Activated CD8-positive, alpha-beta T cell treated with anti-CD3 and anti-CD28 coated beads, Interleukin-2, amount 10 ng/mL, durations not matched to agents 7 days and 5 days (primary cell): ENCODE measurements at regions of chr15 and their contacts with region 1.

Region 1: DNA sequence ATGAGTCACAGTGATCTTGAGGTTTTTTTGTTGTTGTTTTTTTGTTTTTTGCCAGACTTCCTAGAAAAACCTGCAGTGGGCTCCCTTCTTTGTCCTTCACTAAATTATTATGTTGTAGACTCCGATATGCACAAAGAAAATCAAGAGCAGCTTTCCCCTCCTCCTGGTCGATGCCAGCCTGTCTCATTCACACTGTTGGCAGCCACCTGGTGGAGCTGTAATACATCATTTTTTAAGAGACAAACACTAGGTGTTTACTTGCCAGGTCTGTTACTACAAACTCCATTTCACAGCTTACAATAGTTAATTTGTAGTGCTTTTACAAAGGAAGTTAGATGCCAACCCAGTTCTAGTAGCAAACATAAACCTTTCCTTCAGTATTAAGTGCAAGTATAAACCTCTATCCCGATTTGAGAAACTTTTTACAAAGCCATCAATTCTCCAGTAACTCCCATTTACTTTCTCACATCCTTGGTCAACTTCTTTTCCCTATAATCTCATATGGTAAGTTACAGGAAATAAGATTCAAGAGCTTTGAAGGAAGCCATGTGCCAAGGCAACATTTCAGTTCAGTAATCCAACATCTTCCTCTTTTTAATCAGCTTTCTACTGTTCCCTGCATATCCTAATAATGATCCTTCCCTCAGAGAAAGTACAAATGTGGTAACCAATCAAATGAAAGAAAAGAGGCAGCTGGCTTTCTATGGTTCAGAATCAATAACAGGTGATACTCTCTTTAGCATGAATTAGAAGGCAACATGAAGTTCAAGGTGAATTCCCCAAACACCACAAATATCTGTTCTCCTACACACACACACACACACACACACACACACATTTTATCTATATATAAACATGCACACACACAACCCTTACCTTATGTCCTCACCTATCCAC is 14.0 kb downstream of the AAGAB start:
- DNase-seq: peak; percentile 30
- ATAC-seq: peak; percentile 64
- H3K4me3 Mint-ChIP-seq: peak overlapping the region; percentile 44
- H3K27ac Mint-ChIP-seq: peak overlapping the region; percentile 61
- H3K4me1 Mint-ChIP-seq: peaks cover 41% of the 10 kb centered on the region
- H3K27me3 Mint-ChIP-seq: no peaks in the 10 kb centered on the region

Region 2: DNA sequence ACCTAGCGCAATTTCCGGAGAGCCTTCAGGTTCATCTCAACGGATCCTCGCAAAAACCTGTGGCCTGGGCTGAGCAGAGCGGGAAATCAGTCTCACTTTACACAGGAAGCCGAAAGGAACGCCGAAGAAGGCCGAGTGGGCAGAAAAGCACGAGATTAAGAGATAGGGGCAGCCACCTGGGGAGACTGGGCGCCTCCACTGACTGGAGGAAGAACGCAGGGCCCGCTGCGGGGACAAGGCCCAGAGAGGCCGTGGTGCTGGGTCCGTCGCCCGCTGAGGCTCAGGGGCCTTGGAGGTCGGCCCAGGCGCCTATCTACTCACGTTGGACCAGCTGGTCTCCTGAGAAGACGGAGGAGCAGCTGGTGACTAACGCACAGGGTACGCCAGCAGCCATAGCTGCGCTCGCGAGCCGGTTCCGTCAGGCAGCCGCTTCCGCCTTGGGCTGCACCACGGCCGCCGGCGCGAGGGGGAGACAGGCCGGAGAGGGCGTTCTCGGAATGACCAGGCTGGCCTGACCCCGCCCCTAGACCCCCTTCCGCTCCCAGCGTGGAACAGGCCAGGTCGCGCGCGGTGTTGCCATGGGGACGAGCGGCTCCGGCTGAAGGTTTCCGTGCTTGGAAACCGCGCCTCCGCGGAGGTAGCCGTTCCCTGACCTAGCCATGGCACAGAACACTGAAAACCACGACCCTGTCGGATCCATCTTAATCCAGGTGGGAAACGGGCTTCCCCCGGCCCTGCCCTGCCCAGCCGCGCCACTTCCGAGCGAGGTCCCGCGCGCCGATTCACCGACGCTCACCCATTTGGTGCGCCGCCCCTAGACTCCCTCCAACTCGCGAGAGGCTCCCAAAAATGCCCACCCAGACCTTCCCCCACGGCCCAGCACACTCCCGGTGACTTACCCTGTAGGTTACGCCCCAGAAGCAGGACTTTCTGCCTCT is 14.0 kb after region 1 on chr15 and contains the starts of genes AAGAB and IQCH:
- CTCF ChIA-PET with region 1: interaction called, 17 read pairs
- POLR2A ChIA-PET with region 1: no interaction called
- DNase-seq: peak; percentile 98
- ATAC-seq: peak; percentile 97
- H3K4me3 Mint-ChIP-seq: peak within 1 kb of the TSS; percentile 92
- H3K27ac Mint-ChIP-seq: peak within 1 kb of the TSS; percentile 95
- H3K4me1 Mint-ChIP-seq: peaks cover 34% of the 10 kb centered on the region
- H3K27me3 Mint-ChIP-seq: peaks cover 11% of the 10 kb centered on the region
- total RNA-seq, gene AAGAB: 57.2 TPM
- total RNA-seq, gene IQCH: 0.97 to 2.2 TPM

Region 3: DNA sequence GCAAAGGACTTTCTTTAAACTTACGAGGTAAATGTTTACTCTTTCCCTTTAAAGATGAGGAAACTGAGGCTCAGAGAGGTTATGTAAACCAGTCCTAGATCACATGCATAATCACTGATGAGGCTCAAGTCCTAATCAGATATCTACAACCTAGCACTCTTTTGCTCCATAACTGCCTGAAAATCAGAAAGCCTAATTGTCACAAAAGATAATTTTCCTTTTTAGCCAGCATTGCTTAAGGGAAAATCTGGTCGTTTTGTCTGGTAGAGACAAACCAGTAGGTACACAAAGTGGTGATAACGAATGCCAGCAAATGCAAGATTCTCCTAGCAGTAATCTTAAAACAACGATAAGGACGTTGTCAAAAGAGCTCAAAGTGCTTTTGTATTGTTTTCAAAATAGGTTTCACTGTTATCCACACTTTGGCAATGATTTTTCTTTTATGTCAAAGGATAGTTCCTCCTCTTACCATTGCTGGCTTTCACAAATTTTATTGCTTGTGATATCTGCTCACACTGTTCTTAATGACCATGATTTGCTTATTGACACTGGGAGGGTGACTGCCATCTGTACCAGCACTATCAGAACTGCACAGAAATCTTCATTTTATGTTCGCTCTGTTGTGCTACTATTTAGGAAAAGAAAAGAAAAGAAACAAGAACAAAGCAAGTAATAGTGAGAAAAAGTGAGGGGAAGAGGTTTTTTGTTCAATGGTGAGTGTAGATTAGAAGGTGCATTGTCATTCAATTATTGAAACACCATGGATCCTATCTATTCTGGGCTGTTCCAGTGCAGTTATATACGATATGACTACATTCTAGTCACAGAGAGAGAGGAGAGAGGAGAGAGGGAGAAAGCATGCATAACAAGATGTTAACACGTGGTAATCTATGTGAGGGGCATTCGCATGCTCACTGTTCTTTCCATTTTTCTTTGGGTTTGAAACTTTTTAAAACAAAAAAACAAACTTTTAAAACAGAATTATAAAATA is 27.8 kb after region 1 on chr15:
- CTCF ChIA-PET with region 1: no interaction called
- POLR2A ChIA-PET with region 1: no interaction called
- DNase-seq: no peak
- ATAC-seq: no peak
- H3K4me3 Mint-ChIP-seq: no peak overlapping the region
- H3K27ac Mint-ChIP-seq: no peak overlapping the region
- H3K4me1 Mint-ChIP-seq: no peaks in the 10 kb centered on the region
- H3K27me3 Mint-ChIP-seq: peaks cover 29% of the 10 kb centered on the region

Region 4: DNA sequence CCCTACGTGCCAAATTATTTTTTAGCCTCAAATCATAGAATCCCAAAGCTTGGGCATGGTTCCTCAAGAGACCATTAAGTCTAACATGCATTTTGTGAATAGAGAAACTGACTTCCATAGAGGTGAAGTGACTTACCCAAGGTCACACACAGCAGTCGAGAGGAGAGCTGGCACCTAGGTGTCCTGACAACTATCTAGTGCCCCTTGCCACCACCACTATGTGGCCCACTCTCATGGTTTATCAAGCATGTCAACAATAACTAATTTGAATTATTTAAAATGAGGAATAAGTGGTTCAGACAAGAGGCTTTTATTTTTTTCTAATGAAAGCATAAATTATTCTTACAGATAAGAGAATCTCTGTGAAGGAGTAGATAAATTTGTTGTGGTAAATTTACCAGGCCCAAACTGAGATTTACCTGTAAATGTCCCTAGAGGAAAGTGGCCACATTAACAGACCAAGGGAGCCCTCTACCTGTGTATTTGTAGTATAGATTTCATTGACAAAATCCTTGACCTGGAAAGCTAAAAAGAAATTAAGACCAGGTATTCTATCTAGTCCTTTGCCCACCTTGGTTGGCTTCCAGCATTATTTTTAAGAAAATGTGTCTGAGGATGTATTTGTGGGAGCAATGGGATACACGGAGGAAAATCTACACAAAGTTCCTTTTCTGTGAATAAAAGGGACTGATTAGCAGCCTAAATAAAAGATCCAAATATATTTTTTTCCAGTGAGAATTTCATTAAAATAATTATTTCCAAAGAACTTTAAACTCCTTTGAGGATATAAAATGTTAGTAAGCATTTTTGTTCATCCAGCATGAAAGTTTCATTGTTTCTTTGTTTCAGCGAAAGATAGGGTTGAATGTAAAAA is 63.2 kb after region 1 on chr15:
- CTCF ChIA-PET with region 1: interaction called, 18 read pairs
- POLR2A ChIA-PET with region 1: no interaction called
- DNase-seq: peak; percentile 45
- ATAC-seq: peak; percentile 55
- H3K4me3 Mint-ChIP-seq: no peak overlapping the region
- H3K27ac Mint-ChIP-seq: no peak overlapping the region
- H3K4me1 Mint-ChIP-seq: no peaks in the 10 kb centered on the region
- H3K27me3 Mint-ChIP-seq: peaks cover 6% of the 10 kb centered on the region